CD4-positive, alpha-beta memory T cell (primary cell): ENCODE measurements at regions of chr3 and their contacts with region 1.

Region 1: DNA sequence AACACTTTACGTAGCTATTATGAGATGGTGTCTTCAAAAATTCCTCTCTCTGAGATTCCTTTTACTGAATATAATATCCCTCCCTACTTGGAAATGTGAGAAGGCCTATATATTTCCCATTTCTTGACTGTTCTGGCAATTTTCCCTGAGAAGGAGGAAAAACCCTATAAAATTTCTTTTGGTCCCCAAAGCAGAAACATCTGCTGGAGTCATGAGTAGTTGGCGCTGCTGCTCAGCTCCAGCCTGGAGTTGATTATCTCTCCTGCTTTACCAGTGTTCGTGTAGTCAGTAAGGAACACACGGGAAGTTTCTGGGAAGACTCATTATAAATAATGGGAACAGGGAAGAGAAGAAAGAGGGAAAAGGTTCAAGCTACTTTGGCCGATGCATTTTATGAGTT is 680.1 kb downstream of the EPHA3 start:
- DNase-seq: no peak
- H3K4me3 ChIP-seq: no peak overlapping the region
- H3K4me3 Mint-ChIP-seq: no peak overlapping the region
- H3K27ac ChIP-seq: no peak overlapping the region
- H3K27ac Mint-ChIP-seq: no peak overlapping the region
- H3K4me1 ChIP-seq: no peaks in the 10 kb centered on the region
- H3K4me1 Mint-ChIP-seq: no peaks in the 10 kb centered on the region
- H3K27me3 ChIP-seq: no peaks in the 10 kb centered on the region
- H3K27me3 Mint-ChIP-seq: no peaks in the 10 kb centered on the region

Region 2: GRCh38 chr3:89740881-89741177 is 46.7 kb before region 1 on chr3:
- CTCF ChIA-PET with region 1: no interaction called
- POLR2A ChIA-PET with region 1: no interaction called
- intact Hi-C with region 1: loop called (anchors 10 kb)
- DNase-seq: no peak
- H3K4me3 ChIP-seq: no peak overlapping the region
- H3K4me3 Mint-ChIP-seq: no peak overlapping the region
- H3K27ac ChIP-seq: no peak overlapping the region
- H3K27ac Mint-ChIP-seq: no peak overlapping the region
- H3K4me1 ChIP-seq: no peaks in the 10 kb centered on the region
- H3K4me1 Mint-ChIP-seq: no peaks in the 10 kb centered on the region
- H3K27me3 ChIP-seq: no peaks in the 10 kb centered on the region
- H3K27me3 Mint-ChIP-seq: no peaks in the 10 kb centered on the region

Region 3: GRCh38 chr3:89877230-89877629 is 89.7 kb after region 1 on chr3:
- CTCF ChIA-PET with region 1: no interaction called
- POLR2A ChIA-PET with region 1: no interaction called
- intact Hi-C with region 1: no loop called
- DNase-seq: no peak
- H3K4me3 ChIP-seq: no peak overlapping the region
- H3K4me3 Mint-ChIP-seq: no peak overlapping the region
- H3K27ac ChIP-seq: no peak overlapping the region
- H3K27ac Mint-ChIP-seq: no peak overlapping the region
- H3K4me1 ChIP-seq: no peaks in the 10 kb centered on the region
- H3K4me1 Mint-ChIP-seq: no peaks in the 10 kb centered on the region
- H3K27me3 ChIP-seq: no peaks in the 10 kb centered on the region
- H3K27me3 Mint-ChIP-seq: no peaks in the 10 kb centered on the region